ENCODE measurements at regions of chr11 and their contacts with region 1.

Region 1: GRCh38 chr11:86218125-86219084 is 26.1 kb upstream of the EED start:
- ATAC-seq: peak in 4 of 8 experiments; percentile 27 to 99 (median 98)
- H3K4me3 ChIP-seq: no peak overlapping the region
- H3K27ac ChIP-seq: no peak overlapping the region
- H3K4me1 ChIP-seq: no peaks in the 10 kb centered on the region

Region 2: GRCh38 chr11:85867751-85868150 is 350.7 kb before region 1 on chr11:
- in situ Hi-C with region 1: loop called in 1 of 9 experiments (anchors 10 kb)
- ATAC-seq: no peak
- H3K4me3 ChIP-seq: no peak overlapping the region
- H3K27ac ChIP-seq: no peak overlapping the region
- H3K4me1 ChIP-seq: peaks cover 0 to 3% of the 10 kb centered on the region in 2 donors

Measured in motor neuron (in vitro differentiated cells).